ENCODE measurements at regions of chr1 and their contacts with region 1.

Region 1: DNA sequence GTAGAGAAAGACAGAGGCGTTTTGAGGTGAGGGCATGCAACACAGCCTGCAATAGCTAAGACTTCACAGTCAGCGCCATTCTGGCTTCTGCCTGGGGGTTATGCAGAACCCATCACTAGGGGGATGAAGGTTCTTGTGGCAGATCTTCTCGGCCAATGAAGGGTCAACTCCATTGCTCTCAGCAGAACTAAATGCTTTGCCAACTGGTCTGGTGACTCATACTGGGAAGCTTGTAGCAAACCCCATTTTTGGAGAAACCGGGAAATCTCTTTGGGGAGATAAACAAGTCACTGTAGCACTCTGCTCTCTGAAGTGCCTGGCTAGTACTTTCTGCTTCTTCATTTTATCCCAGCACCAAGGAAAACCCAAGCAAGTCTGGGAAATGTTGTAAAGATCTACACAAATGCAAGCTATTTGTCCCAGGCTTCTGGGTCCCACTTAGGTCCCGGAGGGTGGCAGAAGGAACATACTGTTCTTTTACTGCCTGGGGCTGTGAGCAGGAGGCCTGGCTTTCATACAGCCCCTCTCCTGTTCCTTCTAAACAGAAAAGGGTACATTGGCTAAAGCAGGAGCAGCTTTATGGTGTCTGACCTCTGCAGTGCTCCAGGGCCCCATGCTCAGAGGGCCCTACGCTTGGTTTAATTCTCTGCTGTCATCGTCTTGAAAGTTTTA is 28.8 kb downstream of the SHISA4 start:
- DNase-seq: no peak

Region 2: DNA sequence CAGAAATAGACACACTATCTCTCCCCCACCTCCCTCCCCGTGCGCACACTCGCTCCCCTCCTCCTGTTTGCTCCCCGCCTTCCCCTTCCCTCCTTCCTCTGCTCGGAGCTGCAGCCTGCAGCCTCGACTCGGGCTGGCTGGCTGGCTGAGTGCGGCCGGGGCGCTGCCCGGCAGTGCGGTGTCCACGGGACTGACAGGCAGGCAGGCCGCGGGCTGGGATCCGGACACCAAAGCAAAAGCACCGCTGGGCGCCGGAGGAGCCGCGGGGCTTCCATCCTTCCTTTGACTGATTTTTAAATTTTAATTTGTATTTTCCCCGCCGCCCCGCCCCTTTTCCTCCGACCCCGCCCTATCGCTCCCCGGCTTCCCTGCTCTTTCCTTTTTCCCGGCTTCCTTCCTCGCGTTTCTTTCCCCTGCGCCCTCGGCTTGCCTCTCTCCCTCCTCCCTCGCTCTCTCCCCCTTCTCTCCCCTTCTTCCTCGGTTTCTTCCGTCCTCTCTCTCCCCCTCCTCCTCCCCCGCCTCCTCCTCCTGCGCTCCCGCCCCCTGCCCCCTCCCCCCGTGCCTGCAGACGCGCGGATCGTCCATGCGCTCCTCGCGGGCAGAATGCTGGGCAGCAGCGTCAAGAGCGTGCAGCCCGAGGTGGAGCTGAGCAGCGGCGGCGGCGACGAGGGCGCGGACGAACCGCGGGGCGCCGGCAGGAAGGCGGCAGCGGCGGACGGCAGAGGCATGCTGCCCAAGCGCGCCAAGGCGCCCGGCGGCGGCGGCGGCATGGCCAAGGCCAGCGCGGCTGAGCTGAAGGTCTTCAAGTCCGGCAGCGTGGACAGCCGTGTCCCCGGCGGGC is 269.2 kb before region 1 on chr1:
- intact Hi-C with region 1: no loop called
- DNase-seq: no peak

Region 3: DNA sequence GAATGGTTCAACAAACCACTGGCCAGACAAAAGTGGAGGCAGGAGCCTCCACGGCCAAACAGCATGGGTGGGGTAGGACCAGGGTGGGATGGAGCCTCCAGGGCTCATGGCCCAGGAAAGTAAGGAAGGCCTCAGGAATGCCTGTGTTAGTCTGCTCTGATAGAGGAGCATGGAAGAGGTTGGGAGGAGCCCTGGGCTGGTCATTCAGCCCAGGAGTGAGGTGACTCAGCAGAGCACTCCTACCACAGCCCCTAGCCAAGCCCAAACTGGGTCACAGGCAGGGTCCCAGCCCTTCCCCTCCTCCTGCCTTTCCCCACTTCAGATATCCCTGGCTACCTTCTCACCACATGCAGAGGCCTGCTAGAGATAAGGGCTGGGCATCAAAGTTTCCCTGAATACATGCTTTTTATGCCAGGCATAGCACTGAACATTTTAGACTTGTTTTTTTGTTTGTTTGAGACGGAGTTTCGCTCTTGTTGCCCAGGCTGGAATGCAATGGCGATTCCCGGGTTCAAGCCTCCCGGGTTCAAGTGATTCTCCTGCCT is 31.9 kb before region 1 on chr1:
- intact Hi-C with region 1: loop called in 1 of 2 experiments (anchors 1 kb)
- DNase-seq: no peak

Measured in posterior vena cava (tissue), 2 donors.